ENCODE measurements at regions of chr1 and their contacts with region 1.

Region 1: GRCh38 chr1:30379684-30380624 is 343.4 kb downstream of the MATN1 start:
- DNase-seq: peak; percentile 85
- H3K4me3 ChIP-seq: peak overlapping the region in 1 of 2 experiments; percentile 28; a peak in 1 of 4 replicates
- H3K27ac ChIP-seq: peak overlapping the region in 1 of 2 experiments; percentile 30; a peak in 1 of 4 replicates
- H3K4me1 ChIP-seq: peaks cover 11 to 36% of the 10 kb centered on the region in 2 experiments; a peak in 3 of 4 replicates
- H3K27me3 ChIP-seq: no peaks in the 10 kb centered on the region
- CTCF ChIP-seq: peak; percentile 78
- EP300 ChIP-seq: no peak
- RAD21 ChIP-seq: peak; percentile 86

Region 2: DNA sequence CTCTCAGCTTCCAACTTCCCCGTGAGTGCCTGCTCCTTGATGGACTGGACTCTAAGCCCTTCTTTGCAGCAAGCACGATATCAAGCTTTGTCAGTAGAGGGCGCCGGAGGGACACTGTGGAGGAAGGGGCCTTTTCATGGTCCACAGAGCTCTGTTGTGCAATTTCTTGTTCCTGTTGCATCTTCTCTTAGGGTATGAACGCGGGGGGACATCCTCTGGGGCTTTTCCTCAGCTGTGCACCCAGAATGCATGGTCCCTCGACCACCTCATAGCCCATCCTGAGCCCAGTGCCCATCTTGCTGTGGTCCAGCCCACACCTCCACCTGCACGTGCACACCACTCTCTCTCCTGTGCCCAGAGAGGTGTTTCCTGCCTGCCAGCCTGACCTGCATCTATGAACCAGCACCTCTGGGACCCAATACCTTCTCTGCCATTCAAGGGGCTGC is 586.8 kb before region 1 on chr1:
- CTCF ChIA-PET with region 1: interaction called, 14 read pairs
- POLR2A ChIA-PET with region 1: no interaction called
- DNase-seq: peak; percentile 74
- H3K4me3 ChIP-seq: no peak overlapping the region; a peak in 1 of 4 replicates
- H3K27ac ChIP-seq: no peak overlapping the region
- H3K4me1 ChIP-seq: peaks cover 0 to 12% of the 10 kb centered on the region in 2 experiments; a peak in 1 of 4 replicates
- H3K27me3 ChIP-seq: no peaks in the 10 kb centered on the region
- CTCF ChIP-seq: peak; percentile 78
- EP300 ChIP-seq: no peak
- RAD21 ChIP-seq: peak; percentile 96

Region 3: GRCh38 chr1:30133414-30134055 is 246.4 kb before region 1 on chr1:
- CTCF ChIA-PET with region 1: interaction called, 23 read pairs
- POLR2A ChIA-PET with region 1: no interaction called
- DNase-seq: peak; percentile 31
- H3K4me3 ChIP-seq: no peak overlapping the region
- H3K27ac ChIP-seq: peak overlapping the region in 1 of 2 experiments; percentile 86; a peak in 2 of 4 replicates
- H3K4me1 ChIP-seq: peaks cover 0 to 36% of the 10 kb centered on the region in 2 experiments; a peak in 2 of 4 replicates
- H3K27me3 ChIP-seq: no peaks in the 10 kb centered on the region
- CTCF ChIP-seq: no peak
- EP300 ChIP-seq: no peak
- RAD21 ChIP-seq: no peak

Region 4: DNA sequence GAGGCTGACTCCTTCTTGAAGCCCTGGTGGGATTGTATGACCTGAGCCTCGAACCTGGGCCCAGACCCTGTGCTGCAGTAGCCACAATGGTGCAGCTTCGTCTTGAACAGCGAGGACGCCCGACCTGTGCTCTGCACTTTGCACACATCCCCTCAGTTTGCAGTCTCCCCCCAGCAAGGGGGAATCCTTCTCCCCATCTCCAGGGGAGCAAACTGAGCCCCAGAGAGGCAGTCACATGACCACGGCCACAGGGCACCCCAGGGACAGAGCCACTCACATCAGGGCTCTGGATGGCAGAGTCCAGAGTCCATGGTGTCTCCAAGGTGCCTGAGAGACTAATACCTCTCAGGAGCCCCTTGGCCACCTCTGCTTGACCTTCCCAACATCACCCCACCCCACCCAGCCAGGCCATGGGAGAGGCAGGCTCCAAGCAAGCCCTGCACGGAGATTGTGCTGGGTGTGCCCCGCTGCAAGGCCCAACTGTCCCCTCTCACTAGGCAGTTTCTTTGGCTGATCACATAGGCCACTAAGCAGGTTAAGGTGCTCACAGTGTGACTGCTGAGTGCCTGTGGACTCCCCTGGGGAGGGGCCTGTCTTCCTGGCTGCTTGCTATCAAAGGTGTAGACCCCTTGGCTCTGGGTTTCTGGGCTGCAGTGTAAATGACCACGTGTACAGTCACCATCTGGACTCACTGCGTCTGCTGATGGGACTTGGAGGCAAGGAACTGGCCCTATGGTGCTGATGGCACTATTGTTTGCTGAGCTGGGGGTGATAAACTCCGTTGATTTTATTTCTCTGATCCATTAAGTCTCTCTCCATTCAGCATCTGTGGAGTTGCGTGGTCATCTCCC is 54.6 kb before region 1 on chr1:
- CTCF ChIA-PET with region 1: interaction called, 10 read pairs
- POLR2A ChIA-PET with region 1: no interaction called
- DNase-seq: no peak
- H3K4me3 ChIP-seq: no peak overlapping the region
- H3K27ac ChIP-seq: no peak overlapping the region
- H3K4me1 ChIP-seq: peaks cover 0 to 26% of the 10 kb centered on the region in 2 experiments; a peak in 1 of 4 replicates
- H3K27me3 ChIP-seq: no peaks in the 10 kb centered on the region
- CTCF ChIP-seq: no peak
- EP300 ChIP-seq: no peak
- RAD21 ChIP-seq: no peak

Region 5: GRCh38 chr1:30359539-30360220 is 20.3 kb before region 1 on chr1:
- CTCF ChIA-PET with region 1: interaction called, 75 read pairs
- POLR2A ChIA-PET with region 1: no interaction called
- DNase-seq: no peak
- H3K4me3 ChIP-seq: no peak overlapping the region
- H3K27ac ChIP-seq: no peak overlapping the region
- H3K4me1 ChIP-seq: peaks cover 0 to 4% of the 10 kb centered on the region in 2 experiments; a peak in 1 of 4 replicates
- H3K27me3 ChIP-seq: no peaks in the 10 kb centered on the region
- CTCF ChIP-seq: no peak
- EP300 ChIP-seq: no peak
- RAD21 ChIP-seq: no peak

Region 6: GRCh38 chr1:30415171-30416130 is 35.5 kb after region 1 on chr1:
- CTCF ChIA-PET with region 1: interaction called, 12 read pairs
- POLR2A ChIA-PET with region 1: no interaction called
- DNase-seq: no peak
- H3K4me3 ChIP-seq: no peak overlapping the region
- H3K27ac ChIP-seq: no peak overlapping the region
- H3K4me1 ChIP-seq: no peaks in the 10 kb centered on the region; a peak in 1 of 4 replicates
- H3K27me3 ChIP-seq: no peaks in the 10 kb centered on the region
- CTCF ChIP-seq: no peak
- EP300 ChIP-seq: no peak
- RAD21 ChIP-seq: no peak

Region 7: GRCh38 chr1:30437059-30437576 is 57.2 kb after region 1 on chr1:
- CTCF ChIA-PET with region 1: no interaction called
- POLR2A ChIA-PET with region 1: no interaction called
- DNase-seq: no peak
- H3K4me3 ChIP-seq: no peak overlapping the region
- H3K27ac ChIP-seq: no peak overlapping the region
- H3K4me1 ChIP-seq: no peaks in the 10 kb centered on the region
- H3K27me3 ChIP-seq: no peaks in the 10 kb centered on the region
- CTCF ChIP-seq: no peak
- EP300 ChIP-seq: no peak
- RAD21 ChIP-seq: no peak